Esophagus muscularis mucosa (tissue), 4 donors: ENCODE measurements at regions of chr6 and their contacts with region 1.

Region 1: DNA sequence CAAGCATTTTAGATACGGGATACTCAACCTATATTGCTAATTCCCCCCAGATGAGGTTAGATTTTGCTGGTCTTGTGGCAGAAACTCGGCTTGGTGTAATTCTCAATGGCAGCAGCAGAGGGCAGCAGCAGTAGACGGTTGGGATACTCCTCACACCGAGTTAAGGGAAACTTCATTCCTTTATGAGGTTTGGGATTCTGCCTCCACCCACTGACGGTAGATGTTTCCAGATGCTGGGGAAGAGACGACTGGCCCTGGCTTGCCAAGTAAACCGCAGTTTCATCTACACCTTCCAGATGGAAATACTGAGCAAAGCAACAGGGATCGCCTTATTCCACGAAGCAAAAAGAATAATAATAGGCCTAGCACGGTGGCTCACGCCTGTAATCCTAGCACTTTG is 8.2 kb upstream of the TBC1D7 start:
- DNase-seq: peak; percentile 96
- H3K4me3 ChIP-seq: no peak overlapping the region
- H3K27ac ChIP-seq: no peak overlapping the region
- H3K4me1 ChIP-seq: peaks cover 0 to 6% (median 2%) of the 10 kb centered on the region in 4 donors
- H3K27me3 ChIP-seq: no peaks in the 10 kb centered on the region
- CTCF ChIP-seq: peak; percentile 96 to 97 (median 96)
- EP300 ChIP-seq: no peak
- POLR2A ChIP-seq: no peak

Region 2: DNA sequence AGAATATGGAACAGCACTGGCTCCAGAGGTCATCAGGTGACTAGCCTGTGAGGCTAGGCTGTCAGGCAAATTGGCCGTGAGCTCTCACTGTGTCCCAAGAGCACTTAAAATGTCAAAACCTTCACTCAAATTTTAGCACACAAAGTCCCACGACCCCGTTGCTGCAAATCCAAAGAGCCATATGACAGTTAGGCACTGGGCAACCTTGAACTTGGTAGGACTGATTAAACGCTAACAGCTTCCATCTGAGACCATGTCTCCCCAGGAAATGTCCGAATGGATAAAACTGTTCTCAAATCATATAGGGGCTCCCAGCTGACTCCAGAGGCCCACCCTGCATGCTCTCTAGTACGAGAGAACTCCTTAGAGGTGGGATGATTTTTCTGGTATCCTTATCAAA is 423.4 kb before region 1 on chr6:
- intact Hi-C with region 1: loop called (anchors 2 kb)
- DNase-seq: no peak
- H3K4me3 ChIP-seq: no peak overlapping the region
- H3K27ac ChIP-seq: no peak overlapping the region
- H3K4me1 ChIP-seq: no peaks in the 10 kb centered on the region
- H3K27me3 ChIP-seq: no peaks in the 10 kb centered on the region
- CTCF ChIP-seq: no peak
- EP300 ChIP-seq: no peak
- POLR2A ChIP-seq: no peak

Region 3: DNA sequence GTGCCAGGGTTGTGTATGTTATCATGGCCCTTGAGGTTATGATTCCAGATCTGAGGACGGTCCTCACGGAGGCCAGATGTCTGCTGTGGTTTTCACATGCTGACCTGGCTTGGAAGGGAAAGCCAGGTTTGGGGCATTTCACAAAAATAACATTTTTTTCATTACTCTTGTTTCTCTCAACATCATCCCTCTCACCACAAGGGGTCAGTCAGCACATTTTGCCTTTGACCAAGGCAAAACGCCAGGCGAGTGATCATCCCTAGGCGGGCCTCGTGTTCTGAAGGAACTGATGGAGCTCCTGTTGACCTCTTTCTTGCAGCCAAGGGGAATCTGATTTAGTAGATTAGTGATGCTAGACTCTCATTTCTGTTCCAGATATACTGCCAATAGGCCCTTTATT is 141.7 kb before region 1 on chr6:
- intact Hi-C with region 1: loop called (anchors 5 kb)
- DNase-seq: no peak
- H3K4me3 ChIP-seq: no peak overlapping the region
- H3K27ac ChIP-seq: no peak overlapping the region
- H3K4me1 ChIP-seq: peaks cover 0 to 5% (median 0%) of the 10 kb centered on the region in 4 donors
- H3K27me3 ChIP-seq: peaks cover 0 to 6% (median 0%) of the 10 kb centered on the region in 4 donors
- CTCF ChIP-seq: peak; percentile 27 to 50 (median 32)
- EP300 ChIP-seq: no peak
- POLR2A ChIP-seq: no peak

Region 4: GRCh38 chr6:13375360-13375878 is 38.9 kb after region 1 on chr6:
- intact Hi-C with region 1: loop called (anchors 5 kb)
- DNase-seq: no peak
- H3K4me3 ChIP-seq: no peak overlapping the region
- H3K27ac ChIP-seq: no peak overlapping the region
- H3K4me1 ChIP-seq: peaks cover 0 to 21% (median 12%) of the 10 kb centered on the region in 4 donors
- H3K27me3 ChIP-seq: no peaks in the 10 kb centered on the region
- CTCF ChIP-seq: no peak
- EP300 ChIP-seq: no peak
- POLR2A ChIP-seq: no peak

Region 5: DNA sequence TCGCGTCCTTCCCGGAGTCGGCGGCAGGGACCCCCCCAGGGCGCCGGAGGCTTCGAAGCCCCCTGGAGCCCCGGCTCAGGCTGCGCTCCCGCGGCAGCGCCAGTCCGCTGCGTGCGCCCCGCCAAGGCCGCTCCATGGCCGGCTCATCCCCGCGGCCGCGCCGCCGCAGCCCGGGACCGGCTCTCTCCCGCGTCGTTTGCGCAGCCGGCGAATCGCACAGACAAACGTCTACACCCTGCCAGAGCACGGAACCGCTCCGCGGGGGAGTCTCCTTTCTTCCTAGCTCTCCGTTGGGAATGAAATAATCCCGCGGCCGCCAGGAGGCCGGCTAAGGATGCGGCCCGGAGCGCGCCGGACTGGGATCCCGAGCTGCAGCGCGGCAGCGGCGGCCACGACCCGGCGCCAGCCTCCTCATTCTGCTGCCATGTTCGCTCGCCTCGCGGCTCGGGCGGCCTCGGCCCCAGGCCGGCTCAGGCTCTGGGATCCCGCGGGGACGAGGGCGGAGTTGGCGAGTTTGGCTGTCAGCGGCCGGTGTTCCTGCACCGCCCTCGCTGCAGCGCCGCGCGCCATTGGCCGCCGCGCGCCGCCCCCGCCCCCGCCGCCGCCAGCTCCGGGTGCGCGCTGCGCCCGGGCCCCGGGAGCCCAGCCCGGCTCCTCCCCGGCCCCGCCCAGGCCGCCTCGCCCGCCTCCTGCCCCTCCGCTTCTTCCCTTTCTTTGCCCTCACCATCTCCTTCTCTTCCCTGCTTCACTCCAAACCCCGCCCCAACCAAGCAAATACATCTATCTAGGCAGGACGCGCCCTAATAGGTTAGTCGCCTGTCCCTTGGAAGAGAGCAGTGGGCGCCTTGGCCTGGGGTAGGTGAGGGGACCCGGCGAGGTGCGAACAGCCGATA is 150.8 kb after region 1 on chr6 and contains the start of gene GFOD1:
- intact Hi-C with region 1: loop called (anchors 5 kb)
- DNase-seq: peak; percentile 94
- H3K4me3 ChIP-seq: peak within 1 kb of the TSS; percentile 72 to 93 (median 88)
- H3K27ac ChIP-seq: peak within 1 kb of the TSS; percentile 89 to 96 (median 94)
- H3K4me1 ChIP-seq: peaks cover 20 to 38% (median 32%) of the 10 kb centered on the region in 4 donors
- H3K27me3 ChIP-seq: no peaks in the 10 kb centered on the region
- CTCF ChIP-seq: peak in 1 of 3 experiments; percentile 23
- EP300 ChIP-seq: no peak
- POLR2A ChIP-seq: peak; percentile 64
- total RNA-seq, gene GFOD1: 21.7 to 34.5 (median 25.8) TPM

Region 6: DNA sequence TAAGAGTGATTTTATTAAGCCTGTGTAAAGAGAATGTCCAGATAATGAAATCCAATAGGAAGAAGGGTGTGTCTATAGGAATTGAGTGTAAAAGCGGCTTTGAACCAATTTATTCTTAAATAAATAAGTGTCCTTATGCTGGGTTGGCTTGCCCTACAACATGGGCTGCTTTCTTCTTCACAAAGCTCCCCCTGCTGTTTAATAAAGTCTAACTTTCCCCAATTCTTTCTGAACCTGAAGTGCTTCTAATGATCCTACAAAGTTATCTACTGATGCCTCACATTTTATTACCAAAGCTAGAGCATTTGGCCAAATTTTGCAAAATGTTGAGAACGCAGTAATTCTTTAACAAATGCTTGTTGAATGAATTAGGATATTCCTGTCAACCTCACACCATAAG is 201.5 kb after region 1 on chr6:
- intact Hi-C with region 1: loop called (anchors 1 kb)
- DNase-seq: no peak
- H3K4me3 ChIP-seq: no peak overlapping the region
- H3K27ac ChIP-seq: no peak overlapping the region
- H3K4me1 ChIP-seq: peaks cover 0 to 20% (median 0%) of the 10 kb centered on the region in 4 donors
- H3K27me3 ChIP-seq: no peaks in the 10 kb centered on the region
- CTCF ChIP-seq: peak; percentile 41 to 57 (median 46)
- EP300 ChIP-seq: no peak
- POLR2A ChIP-seq: no peak

Region 7: GRCh38 chr6:13574571-13575376 is 238.2 kb after region 1 on chr6 and contains the start of gene SIRT5:
- intact Hi-C with region 1: loop called (anchors 5 kb)
- DNase-seq: peak; percentile 95
- H3K4me3 ChIP-seq: peak within 1 kb of the TSS; percentile 74 to 96 (median 86)
- H3K27ac ChIP-seq: peak within 1 kb of the TSS; percentile 92 to 99 (median 97)
- H3K4me1 ChIP-seq: peaks cover 13 to 25% (median 17%) of the 10 kb centered on the region in 4 donors
- H3K27me3 ChIP-seq: no peaks in the 10 kb centered on the region
- CTCF ChIP-seq: no peak
- EP300 ChIP-seq: no peak
- POLR2A ChIP-seq: peak; percentile 78
- total RNA-seq, gene SIRT5: 7.8 to 14.5 (median 12.6) TPM